Stomach (tissue), 19 donors: ENCODE measurements at regions of chr14 and their contacts with region 1.

Region 1: DNA sequence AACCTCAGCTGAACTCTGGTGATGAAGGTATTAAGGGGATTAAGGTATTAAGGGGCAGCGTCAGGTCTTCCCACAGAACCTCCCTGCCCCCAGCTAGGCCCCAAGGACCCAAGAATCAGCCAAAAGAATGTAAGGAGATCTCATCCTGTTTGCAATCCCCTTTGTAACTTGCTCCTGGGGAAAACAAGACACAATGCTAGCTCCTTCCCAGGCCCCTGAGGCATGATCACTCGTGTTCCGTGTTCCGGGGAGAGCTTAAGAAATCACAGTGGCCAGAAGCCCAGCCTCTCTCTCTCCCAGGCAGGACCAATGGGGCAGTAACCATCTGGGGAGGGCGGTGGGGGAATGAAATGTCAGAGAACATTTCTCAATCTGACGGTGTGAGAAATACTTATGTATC is 33.2 kb downstream of the PIGH start:
- DNase-seq: no peak
- H3K4me3 ChIP-seq: no peak overlapping the region
- H3K27ac ChIP-seq: peak overlapping the region in 1 of 5 donors; percentile 2
- H3K4me1 ChIP-seq: peaks cover 0 to 8% (median 3%) of the 10 kb centered on the region in 4 donors
- H3K27me3 ChIP-seq: no peaks in the 10 kb centered on the region
- CTCF ChIP-seq: no peak
- EP300 ChIP-seq: no peak
- POLR2A ChIP-seq: no peak

Region 2: GRCh38 chr14:67240978-67241414 is 325.9 kb before region 1 on chr14:
- intact Hi-C with region 1: no loop called
- DNase-seq: peak; percentile 98 to 99
- H3K4me3 ChIP-seq: peak overlapping the region; percentile 68 to 97 (median 77)
- H3K27ac ChIP-seq: peak overlapping the region; percentile 94 to 99 (median 99)
- H3K4me1 ChIP-seq: peaks cover 8 to 45% (median 29%) of the 10 kb centered on the region in 4 donors
- H3K27me3 ChIP-seq: no peaks in the 10 kb centered on the region
- CTCF ChIP-seq: no peak
- EP300 ChIP-seq: no peak
- POLR2A ChIP-seq: peak in 1 of 4 donors; percentile 36

Region 3: DNA sequence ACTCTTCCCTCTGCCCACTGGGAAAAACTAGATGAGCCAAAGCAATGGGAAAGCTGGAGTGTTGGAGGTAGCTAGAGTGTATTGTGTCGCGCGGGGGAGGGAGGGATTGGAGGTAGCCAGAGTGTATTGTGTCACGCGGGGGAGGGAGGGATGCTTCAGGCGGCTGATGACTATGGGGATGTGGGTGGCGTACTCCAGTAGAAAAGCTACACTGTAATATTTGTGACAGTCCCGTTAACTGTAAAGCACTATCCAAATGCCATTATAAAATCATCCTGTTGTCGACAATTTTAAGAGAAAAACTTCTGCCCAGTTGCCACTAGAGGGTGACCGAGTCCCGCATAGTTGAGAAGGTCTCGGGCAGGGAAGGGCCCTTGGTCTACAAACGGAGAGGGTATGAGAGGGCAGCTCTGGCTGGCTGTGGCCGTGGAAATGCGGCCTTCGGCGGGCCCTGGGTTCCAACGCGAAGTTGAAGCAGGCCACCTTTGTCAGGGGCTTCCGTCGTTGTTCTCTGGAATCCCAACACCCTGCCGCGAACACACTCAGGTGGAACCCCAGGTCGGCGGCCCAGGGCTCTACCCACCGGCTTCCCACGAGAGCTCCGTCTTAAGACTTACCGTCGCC is 139.8 kb before region 1 on chr14:
- intact Hi-C with region 1: loop called (anchors 5 kb)
- DNase-seq: peak; percentile 82 to 93
- H3K4me3 ChIP-seq: no peak overlapping the region
- H3K27ac ChIP-seq: no peak overlapping the region
- H3K4me1 ChIP-seq: peaks cover 4 to 25% (median 19%) of the 10 kb centered on the region in 4 donors
- H3K27me3 ChIP-seq: peaks cover 0 to 25% (median 0%) of the 10 kb centered on the region in 3 donors
- CTCF ChIP-seq: peak in 5 of 7 experiments; percentile 68 to 76 (median 74)
- EP300 ChIP-seq: no peak
- POLR2A ChIP-seq: no peak